Activated B cell treated with CpG ODN at 0.5 μM for 24 hours (primary cell): ENCODE measurements at regions of chr2 and their contacts with region 1.

Region 1: GRCh38 chr2:30208452-30208851 is 22.9 kb upstream of the LBH start:
- DNase-seq: no peak
- ATAC-seq: peak; percentile 62
- H3K4me3 Mint-ChIP-seq: no peak overlapping the region
- H3K27ac Mint-ChIP-seq: peak overlapping the region; percentile 20
- H3K4me1 Mint-ChIP-seq: peaks cover 18% of the 10 kb centered on the region
- H3K27me3 Mint-ChIP-seq: no peaks in the 10 kb centered on the region
- CTCF ChIP-seq: peak; percentile 82

Region 2: DNA sequence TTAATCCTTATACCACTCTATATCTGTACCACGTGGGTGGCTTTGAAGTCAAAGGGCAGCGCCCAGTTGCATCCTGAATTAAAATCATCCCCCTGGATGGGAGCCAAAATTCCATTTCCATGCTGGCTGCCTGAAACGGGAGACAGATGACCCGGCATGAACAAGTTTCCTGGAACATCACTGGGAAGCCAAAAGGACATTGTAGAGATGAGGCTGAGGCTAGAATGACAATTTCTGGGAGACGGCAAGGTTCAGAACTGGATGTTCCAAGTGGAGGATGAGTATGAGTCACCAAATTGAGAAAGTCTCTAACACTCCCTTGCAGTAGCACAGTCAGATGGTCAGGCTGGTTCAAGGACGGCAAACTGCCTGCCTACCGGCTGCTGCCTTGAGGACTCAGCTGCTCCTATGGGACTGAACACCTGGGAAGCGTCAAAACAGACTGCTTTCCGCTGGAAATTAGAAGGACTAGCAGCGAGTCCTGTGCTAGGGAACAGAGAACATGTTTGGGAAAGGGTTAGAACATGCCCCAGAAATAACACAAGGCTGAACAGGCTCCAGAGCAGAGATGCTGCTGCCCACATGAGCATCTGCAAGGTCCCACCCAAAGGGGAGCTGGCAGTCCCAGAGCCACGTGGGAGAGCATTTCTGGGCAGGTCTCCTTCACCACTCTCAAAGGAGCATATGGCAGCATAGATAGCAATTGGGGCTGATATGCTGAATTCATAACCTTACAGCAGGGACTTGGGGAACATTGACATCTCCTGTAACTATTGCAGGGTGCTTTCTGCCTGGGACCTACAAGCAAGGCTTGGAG is 29.6 kb before region 1 on chr2:
- CTCF ChIA-PET with region 1: no interaction called
- POLR2A ChIA-PET with region 1: no interaction called
- intact Hi-C with region 1: no loop called
- DNase-seq: no peak
- ATAC-seq: no peak
- H3K4me3 Mint-ChIP-seq: no peak overlapping the region
- H3K27ac Mint-ChIP-seq: no peak overlapping the region
- H3K4me1 Mint-ChIP-seq: no peaks in the 10 kb centered on the region
- H3K27me3 Mint-ChIP-seq: peaks cover 3% of the 10 kb centered on the region
- CTCF ChIP-seq: no peak

Region 3: DNA sequence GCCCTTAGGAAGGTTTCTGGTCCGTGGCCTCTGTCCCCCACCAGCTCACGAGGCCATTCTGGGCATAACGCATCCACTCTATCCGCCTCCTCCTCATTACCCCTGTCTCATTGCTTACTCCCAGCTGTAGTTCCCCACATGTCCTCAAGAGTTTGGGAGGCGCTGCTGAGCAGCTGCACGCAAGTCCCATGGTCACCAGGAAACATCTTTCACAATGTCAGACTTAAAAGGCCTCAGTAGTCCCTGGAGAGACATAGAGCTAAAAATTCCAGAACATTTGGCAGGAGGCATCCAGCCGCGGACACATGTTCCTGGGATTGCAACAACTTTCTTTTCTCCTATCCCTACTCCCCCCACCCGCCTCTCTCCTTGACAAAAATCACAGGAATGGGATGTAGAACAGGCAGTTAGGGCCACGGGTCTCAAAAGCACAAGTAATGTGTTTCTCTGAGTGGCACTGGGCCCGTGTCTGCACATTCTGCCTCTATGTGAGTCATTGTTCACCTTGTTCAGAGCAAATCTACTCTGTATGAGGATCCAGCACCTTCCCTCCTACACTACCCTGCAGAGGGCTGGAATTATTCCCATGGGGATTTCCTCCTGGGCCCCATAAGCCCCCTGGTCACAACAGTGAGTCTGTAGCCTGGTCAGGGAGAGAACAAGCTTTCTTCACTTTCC is 31.0 kb after region 1 on chr2:
- CTCF ChIA-PET with region 1: interaction called, 13 read pairs
- POLR2A ChIA-PET with region 1: interaction called, 13 read pairs
- intact Hi-C with region 1: no loop called
- DNase-seq: peak; percentile 60
- ATAC-seq: peak; percentile 71
- H3K4me3 Mint-ChIP-seq: peak overlapping the region; percentile 21
- H3K27ac Mint-ChIP-seq: peak overlapping the region; percentile 94
- H3K4me1 Mint-ChIP-seq: peaks cover 92% of the 10 kb centered on the region
- H3K27me3 Mint-ChIP-seq: no peaks in the 10 kb centered on the region
- CTCF ChIP-seq: peak; percentile 44

Region 4: GRCh38 chr2:30436859-30437435 is 228.5 kb after region 1 on chr2:
- CTCF ChIA-PET with region 1: interaction called, 13 read pairs
- POLR2A ChIA-PET with region 1: no interaction called
- intact Hi-C with region 1: no loop called
- DNase-seq: peak; percentile 20
- ATAC-seq: peak; percentile 89
- H3K4me3 Mint-ChIP-seq: peak overlapping the region; percentile 65
- H3K27ac Mint-ChIP-seq: peak overlapping the region; percentile 90
- H3K4me1 Mint-ChIP-seq: peaks cover 44% of the 10 kb centered on the region
- H3K27me3 Mint-ChIP-seq: no peaks in the 10 kb centered on the region
- CTCF ChIP-seq: no peak

Region 5: DNA sequence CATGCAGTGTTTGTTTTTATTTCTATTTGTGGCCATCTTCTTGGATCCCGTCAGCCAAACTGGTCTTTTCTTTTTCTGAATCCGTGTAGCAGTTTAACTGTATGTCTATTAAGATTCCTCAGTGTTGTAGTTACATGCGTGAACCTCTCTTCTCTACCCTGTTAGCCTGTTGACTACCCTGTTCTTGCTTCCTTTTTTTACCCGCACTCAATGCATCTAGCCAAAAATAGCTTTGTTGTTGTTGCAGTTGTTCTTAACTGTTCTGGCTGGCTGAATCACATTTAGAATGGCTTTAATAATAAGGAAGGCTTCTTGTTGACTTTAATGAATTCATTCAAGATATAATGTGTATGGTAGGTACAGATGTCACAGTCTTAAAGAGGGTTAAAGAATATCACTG is 375.7 kb after region 1 on chr2:
- CTCF ChIA-PET with region 1: interaction called, 3 read pairs
- POLR2A ChIA-PET with region 1: no interaction called
- intact Hi-C with region 1: loop called (anchors 5 kb)
- DNase-seq: no peak
- ATAC-seq: peak; percentile 74
- H3K4me3 Mint-ChIP-seq: peak overlapping the region; percentile 75
- H3K27ac Mint-ChIP-seq: peak overlapping the region; percentile 95
- H3K4me1 Mint-ChIP-seq: peaks cover 82% of the 10 kb centered on the region
- H3K27me3 Mint-ChIP-seq: no peaks in the 10 kb centered on the region
- CTCF ChIP-seq: no peak